Lower leg skin (tissue), 4 donors: ENCODE measurements at regions of chr5 and their contacts with region 1.

Region 1: GRCh38 chr5:3511519-3512333 is 83.9 kb upstream of the IRX1 start:
- DNase-seq: no peak
- H3K4me3 ChIP-seq: no peak overlapping the region
- CTCF ChIP-seq: no peak
- POLR2A ChIP-seq: no peak

Region 2: GRCh38 chr5:3155046-3155445 is 356.7 kb before region 1 on chr5:
- intact Hi-C with region 1: no loop called
- DNase-seq: no peak
- H3K4me3 ChIP-seq: no peak overlapping the region
- CTCF ChIP-seq: no peak
- POLR2A ChIP-seq: no peak

Region 3: GRCh38 chr5:3210531-3210930 is 301.2 kb before region 1 on chr5:
- intact Hi-C with region 1: no loop called
- DNase-seq: peak in 1 of 2 donors; percentile 58
- H3K4me3 ChIP-seq: no peak overlapping the region
- CTCF ChIP-seq: no peak
- POLR2A ChIP-seq: no peak

Region 4: DNA sequence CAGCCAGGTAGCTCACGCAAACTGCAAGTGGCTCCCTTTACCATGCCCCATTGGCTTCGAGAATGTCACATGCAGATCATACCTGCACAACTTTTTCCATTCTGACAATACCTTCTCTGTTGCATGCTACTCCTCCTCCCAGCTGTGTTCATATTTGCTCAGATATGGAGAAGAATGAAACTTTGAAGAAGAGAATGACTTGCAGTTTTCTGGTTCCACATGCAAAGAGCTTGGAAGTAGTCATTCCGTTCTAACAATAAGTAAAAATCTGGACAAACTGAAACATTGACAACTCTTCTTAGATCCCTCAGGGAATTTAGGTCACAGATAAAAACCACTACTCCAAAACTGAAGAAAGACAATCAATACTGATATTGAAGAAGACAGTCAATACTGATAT is 34.3 kb after region 1 on chr5:
- intact Hi-C with region 1: loop called (anchors 1 kb)
- DNase-seq: no peak
- H3K4me3 ChIP-seq: no peak overlapping the region
- CTCF ChIP-seq: no peak
- POLR2A ChIP-seq: no peak

Region 5: DNA sequence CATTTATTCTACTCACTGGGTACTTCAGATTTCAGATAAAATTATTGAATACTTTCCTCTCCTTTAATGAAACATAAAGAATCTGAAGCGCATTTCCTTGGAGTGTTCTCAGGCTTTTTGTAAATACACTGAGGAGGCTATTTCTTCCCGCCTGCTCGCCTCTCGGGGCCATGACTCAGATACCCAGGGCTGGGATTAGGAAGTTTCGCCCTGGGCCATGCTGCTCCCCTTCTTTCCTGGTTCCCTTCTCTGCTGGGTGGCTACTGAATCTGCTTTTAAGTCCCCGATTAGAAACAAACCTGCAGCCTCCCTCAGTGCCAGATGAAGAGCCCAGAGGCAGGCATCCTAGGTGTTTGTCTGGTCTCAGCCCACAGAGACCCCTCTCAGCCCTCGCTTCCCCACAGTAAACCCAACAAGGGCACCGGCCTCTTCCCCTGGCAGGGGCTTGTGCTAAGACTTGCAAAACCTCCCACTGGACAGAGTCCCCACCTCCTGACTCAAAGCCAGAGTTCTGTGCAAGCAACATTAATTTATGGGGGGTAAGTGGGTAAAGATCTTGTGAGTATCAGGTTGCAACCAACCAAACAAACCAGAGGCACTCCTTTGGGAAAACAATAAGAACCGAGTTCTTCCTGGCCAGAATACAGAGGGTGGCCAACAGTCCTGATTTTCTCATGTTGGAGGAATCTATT is 53.2 kb after region 1 on chr5:
- intact Hi-C with region 1: no loop called
- DNase-seq: no peak
- H3K4me3 ChIP-seq: no peak overlapping the region
- CTCF ChIP-seq: no peak
- POLR2A ChIP-seq: no peak